CD4-positive, alpha-beta memory T cell (primary cell): ENCODE measurements at regions of chr3 and their contacts with region 1.

Region 1: DNA sequence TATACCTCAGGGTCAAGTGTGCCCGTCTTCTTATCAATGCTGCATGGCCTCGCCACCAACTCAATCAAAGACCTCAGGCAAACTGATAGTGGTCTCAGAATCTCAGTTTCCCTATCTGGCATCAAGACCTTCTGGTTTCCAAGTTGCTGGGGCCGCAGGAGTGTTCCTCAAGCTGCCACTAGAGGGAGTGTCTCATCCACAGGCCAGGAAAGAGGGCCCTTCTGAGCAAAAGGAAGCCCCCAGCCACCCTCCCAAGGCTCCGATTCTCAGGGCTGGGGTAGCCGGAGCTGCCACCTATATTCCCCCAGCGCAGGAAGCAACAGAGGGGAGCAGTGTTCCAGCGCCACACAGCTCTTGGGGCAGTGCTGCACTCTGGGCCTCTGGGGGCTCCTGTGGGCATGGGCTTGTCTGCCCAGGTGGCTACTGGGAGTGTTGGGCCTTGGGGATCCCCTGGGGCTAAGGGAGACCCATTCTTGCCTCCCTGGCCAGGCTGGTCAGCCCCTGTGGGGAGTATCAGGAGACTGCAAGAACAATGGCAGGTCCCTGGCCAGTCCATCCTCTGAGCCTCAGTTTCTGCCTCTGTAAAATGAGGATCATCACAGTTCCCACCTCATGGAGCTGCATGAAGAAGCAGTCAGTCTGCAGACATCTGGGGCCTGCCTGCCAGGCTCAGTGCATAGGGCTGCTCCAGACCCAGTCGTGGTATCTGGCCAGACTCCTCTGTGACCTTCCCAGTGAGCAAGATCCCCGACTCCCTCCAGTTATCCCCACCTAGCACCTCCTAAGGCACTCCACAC is 23.4 kb upstream of the SEC13 start:
- DNase-seq: peak in 4 of 5 donors; percentile 41 to 50 (median 46)
- H3K4me3 ChIP-seq: no peak overlapping the region
- H3K4me3 Mint-ChIP-seq: no peak overlapping the region
- H3K27ac ChIP-seq: no peak overlapping the region
- H3K27ac Mint-ChIP-seq: no peak overlapping the region
- H3K4me1 ChIP-seq: no peaks in the 10 kb centered on the region
- H3K4me1 Mint-ChIP-seq: no peaks in the 10 kb centered on the region
- H3K27me3 ChIP-seq: no peaks in the 10 kb centered on the region
- H3K27me3 Mint-ChIP-seq: peaks cover 0 to 3% of the 10 kb centered on the region in 2 donors

Region 2: GRCh38 chr3:10099041-10099440 is 245.3 kb before region 1 on chr3:
- CTCF ChIA-PET with region 1: no interaction called
- POLR2A ChIA-PET with region 1: no interaction called
- intact Hi-C with region 1: no loop called
- DNase-seq: no peak
- H3K4me3 ChIP-seq: no peak overlapping the region
- H3K4me3 Mint-ChIP-seq: no peak overlapping the region
- H3K27ac ChIP-seq: no peak overlapping the region
- H3K27ac Mint-ChIP-seq: no peak overlapping the region
- H3K4me1 ChIP-seq: no peaks in the 10 kb centered on the region
- H3K4me1 Mint-ChIP-seq: no peaks in the 10 kb centered on the region
- H3K27me3 ChIP-seq: no peaks in the 10 kb centered on the region
- H3K27me3 Mint-ChIP-seq: no peaks in the 10 kb centered on the region

Region 3: DNA sequence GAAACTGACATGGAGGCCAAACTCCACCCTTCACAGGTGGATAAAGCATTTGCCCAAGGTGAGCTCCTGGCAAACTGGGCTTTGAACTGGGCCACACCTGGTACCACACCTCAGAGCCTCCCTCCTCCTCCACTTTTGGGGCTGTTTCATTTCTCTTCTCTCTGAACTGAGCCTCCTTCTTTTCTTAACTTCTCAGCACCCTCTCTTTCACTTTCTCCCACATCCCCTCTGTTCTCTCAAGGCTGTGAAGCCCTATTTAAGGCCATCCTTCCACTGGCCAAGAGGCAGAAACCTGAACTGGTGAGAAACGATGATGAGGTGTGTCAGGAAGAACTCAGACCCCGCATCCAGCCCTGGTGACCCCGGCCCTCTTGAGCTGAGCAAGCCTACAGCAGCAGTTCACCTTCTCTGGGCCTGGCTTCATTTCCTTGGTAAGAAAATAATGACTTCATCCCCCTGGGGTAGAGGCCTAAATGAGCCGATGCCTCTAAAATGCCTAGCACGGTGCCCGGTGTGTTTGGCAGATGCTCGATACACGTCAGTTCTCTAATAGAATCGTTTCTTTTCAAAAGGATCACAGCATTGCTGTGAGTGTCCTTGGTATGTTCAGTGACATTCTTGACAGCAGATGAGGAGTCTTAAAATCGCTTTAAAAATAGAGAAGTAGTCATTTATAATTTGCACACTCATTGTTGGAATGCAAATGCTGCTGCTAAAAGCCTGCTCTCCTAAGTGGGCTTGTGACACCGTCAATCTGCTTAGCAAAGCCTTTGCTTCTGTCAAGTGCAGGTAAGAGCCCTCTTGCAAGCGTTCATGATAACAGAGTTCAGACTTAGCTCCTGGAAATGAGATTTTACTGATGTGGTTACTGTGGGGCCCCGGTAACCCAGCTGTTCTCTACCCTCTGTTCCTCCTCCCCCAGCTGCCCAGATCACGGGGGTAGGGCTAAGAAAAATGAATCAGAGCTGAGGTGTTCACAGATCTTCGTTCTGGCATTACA is 258.7 kb after region 1 on chr3:
- CTCF ChIA-PET with region 1: no interaction called
- POLR2A ChIA-PET with region 1: no interaction called
- intact Hi-C with region 1: loop called (anchors 10 kb)
- DNase-seq: peak; percentile 76 to 80 (median 79)
- H3K4me3 ChIP-seq: peak overlapping the region in 1 of 2 donors; percentile 0
- H3K4me3 Mint-ChIP-seq: peak overlapping the region; percentile 66 to 90 (median 80)
- H3K27ac ChIP-seq: no peak overlapping the region
- H3K27ac Mint-ChIP-seq: peak overlapping the region; percentile 1 to 92 (median 80)
- H3K4me1 ChIP-seq: peaks cover 41% of the 10 kb centered on the region
- H3K4me1 Mint-ChIP-seq: peaks cover 29 to 42% (median 34%) of the 10 kb centered on the region in 4 donors
- H3K27me3 ChIP-seq: no peaks in the 10 kb centered on the region
- H3K27me3 Mint-ChIP-seq: peaks cover 0 to 1% of the 10 kb centered on the region in 2 donors

Region 4: GRCh38 chr3:10783357-10784351 is 439.3 kb after region 1 on chr3:
- CTCF ChIA-PET with region 1: no interaction called
- POLR2A ChIA-PET with region 1: no interaction called
- intact Hi-C with region 1: loop called (anchors 5 kb)
- DNase-seq: peak in 4 of 5 donors; percentile 16 to 33 (median 26)
- H3K4me3 ChIP-seq: no peak overlapping the region
- H3K4me3 Mint-ChIP-seq: no peak overlapping the region
- H3K27ac ChIP-seq: no peak overlapping the region
- H3K27ac Mint-ChIP-seq: no peak overlapping the region
- H3K4me1 ChIP-seq: no peaks in the 10 kb centered on the region
- H3K4me1 Mint-ChIP-seq: no peaks in the 10 kb centered on the region
- H3K27me3 ChIP-seq: no peaks in the 10 kb centered on the region
- H3K27me3 Mint-ChIP-seq: peaks cover 13 to 21% of the 10 kb centered on the region in 2 donors